Naive thymus-derived CD8-positive, alpha-beta T cell (primary cell): ENCODE measurements at regions of chr6 and their contacts with region 1.

Region 1: GRCh38 chr6:118709859-118710350 is 58.5 kb upstream of the CEP85L start:
- DNase-seq: peak in 9 of 10 donors; percentile 35 to 89 (median 66)
- ATAC-seq: peak; percentile 88 to 93
- H3K4me3 Mint-ChIP-seq: peak overlapping the region; percentile 95 to 99 (median 98)
- H3K27ac Mint-ChIP-seq: peak overlapping the region; percentile 93 to 100 (median 98)
- H3K4me1 Mint-ChIP-seq: peaks cover 39 to 83% (median 66%) of the 10 kb centered on the region in 4 donors
- H3K27me3 Mint-ChIP-seq: no peaks in the 10 kb centered on the region

Region 2: GRCh38 chr6:118367314-118367713 is 342.6 kb before region 1 on chr6:
- POLR2A ChIA-PET with region 1: no interaction called
- DNase-seq: no peak
- ATAC-seq: no peak
- H3K4me3 Mint-ChIP-seq: no peak overlapping the region
- H3K27ac Mint-ChIP-seq: no peak overlapping the region
- H3K4me1 Mint-ChIP-seq: no peaks in the 10 kb centered on the region
- H3K27me3 Mint-ChIP-seq: no peaks in the 10 kb centered on the region

Region 3: GRCh38 chr6:118558464-118559217 is 151.3 kb before region 1 on chr6:
- POLR2A ChIA-PET with region 1: interaction called, 12 read pairs
- DNase-seq: peak in 8 of 10 donors; percentile 9 to 82 (median 45)
- ATAC-seq: peak; percentile 94 to 97
- H3K4me3 Mint-ChIP-seq: peak overlapping the region; percentile 38 to 86 (median 82)
- H3K27ac Mint-ChIP-seq: peak overlapping the region; percentile 93 to 98 (median 96)
- H3K4me1 Mint-ChIP-seq: peaks cover 19 to 55% (median 48%) of the 10 kb centered on the region in 4 donors
- H3K27me3 Mint-ChIP-seq: no peaks in the 10 kb centered on the region

Region 4: DNA sequence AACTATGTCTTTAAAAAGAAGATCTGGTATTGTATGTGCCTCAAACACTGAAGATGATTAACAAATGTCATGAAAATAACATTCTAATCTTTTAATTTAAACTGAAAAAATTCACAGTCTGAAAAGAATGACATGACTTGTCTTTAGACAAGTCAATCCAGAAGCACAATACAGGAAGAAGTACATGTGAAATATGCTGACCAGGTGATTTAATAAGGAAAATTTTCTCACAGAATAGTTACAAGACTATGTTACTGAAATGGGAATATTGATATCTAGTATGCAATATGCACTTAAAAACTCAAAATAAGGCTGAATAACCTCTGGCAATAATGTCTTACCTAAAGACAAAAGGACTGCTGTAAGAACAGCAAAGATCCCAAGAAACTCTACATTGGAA is 71.6 kb before region 1 on chr6:
- POLR2A ChIA-PET with region 1: no interaction called
- DNase-seq: no peak
- ATAC-seq: no peak
- H3K4me3 Mint-ChIP-seq: peak overlapping the region in 1 of 10 donors; percentile 12
- H3K27ac Mint-ChIP-seq: no peak overlapping the region
- H3K4me1 Mint-ChIP-seq: peaks cover 16 to 68% (median 63%) of the 10 kb centered on the region in 4 donors
- H3K27me3 Mint-ChIP-seq: no peaks in the 10 kb centered on the region

Region 5: DNA sequence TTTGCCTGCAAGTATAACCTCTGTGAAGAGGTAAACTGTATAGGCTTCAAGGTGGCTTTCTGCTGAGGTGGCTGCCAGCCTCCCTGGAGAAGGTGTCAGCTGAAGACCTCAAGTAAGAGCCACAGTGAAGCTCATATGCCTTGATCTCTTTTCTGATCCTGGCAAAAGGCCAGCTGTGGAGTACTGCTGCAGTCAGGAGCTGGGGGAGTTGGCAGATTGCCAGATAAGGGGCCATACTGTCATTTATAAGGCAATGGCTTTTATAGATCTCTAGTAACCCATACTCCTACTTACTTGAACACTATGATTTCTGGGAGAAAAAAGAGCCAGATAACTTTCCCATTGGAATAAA is 49.7 kb before region 1 on chr6:
- POLR2A ChIA-PET with region 1: interaction called, 14 read pairs
- DNase-seq: peak; percentile 49 to 86 (median 77)
- ATAC-seq: peak; percentile 79 to 84
- H3K4me3 Mint-ChIP-seq: peak overlapping the region in 9 of 10 donors; percentile 2 to 76 (median 37)
- H3K27ac Mint-ChIP-seq: peak overlapping the region; percentile 75 to 92 (median 86)
- H3K4me1 Mint-ChIP-seq: peaks cover 36 to 70% (median 65%) of the 10 kb centered on the region in 4 donors
- H3K27me3 Mint-ChIP-seq: no peaks in the 10 kb centered on the region

Region 6: GRCh38 chr6:118724211-118724610 is 14.3 kb after region 1 on chr6:
- POLR2A ChIA-PET with region 1: interaction called, 107 read pairs
- DNase-seq: no peak
- ATAC-seq: peak in 1 of 2 donors; percentile 31
- H3K4me3 Mint-ChIP-seq: peak overlapping the region in 8 of 10 donors; percentile 17 to 74 (median 60)
- H3K27ac Mint-ChIP-seq: peak overlapping the region in 9 of 10 donors; percentile 16 to 97 (median 85)
- H3K4me1 Mint-ChIP-seq: peaks cover 51 to 85% (median 79%) of the 10 kb centered on the region in 4 donors
- H3K27me3 Mint-ChIP-seq: no peaks in the 10 kb centered on the region

Region 7: DNA sequence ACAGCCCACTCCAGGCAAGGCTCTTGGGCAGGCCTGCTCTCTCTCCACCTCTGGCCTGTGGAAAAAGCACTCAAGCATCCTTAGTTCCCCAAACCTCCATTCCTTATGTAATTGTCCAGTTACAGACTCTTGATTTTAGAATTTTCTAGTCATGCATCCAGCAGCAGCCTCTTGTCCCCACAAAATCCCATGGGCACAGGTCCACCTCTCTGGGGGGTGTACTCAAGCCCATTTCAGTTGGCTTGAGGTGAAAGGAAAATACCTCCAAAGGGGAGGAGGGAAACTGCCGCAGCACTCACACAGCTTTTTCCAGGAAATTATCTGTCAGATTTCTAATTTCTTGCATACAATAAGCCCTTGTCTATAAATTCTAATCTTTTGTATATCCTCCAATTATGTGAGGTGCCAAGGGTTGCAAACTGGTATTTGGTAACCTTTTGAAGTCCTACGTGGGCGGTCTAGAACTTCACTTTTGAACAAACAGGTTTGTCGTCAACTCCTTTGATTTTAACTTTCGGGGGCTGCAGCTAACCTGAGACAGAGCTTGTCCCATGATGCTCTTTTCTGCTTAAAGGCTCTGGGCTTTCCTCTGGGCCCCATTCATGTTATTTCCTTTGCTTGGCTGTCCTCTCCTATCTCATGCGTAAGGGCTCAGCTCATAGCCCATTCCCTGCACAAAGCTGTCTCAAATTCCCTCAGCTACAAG is 46.2 kb after region 1 on chr6:
- POLR2A ChIA-PET with region 1: interaction called, 11 read pairs
- DNase-seq: peak in 7 of 10 donors; percentile 25 to 80 (median 51)
- ATAC-seq: peak; percentile 92 to 97
- H3K4me3 Mint-ChIP-seq: peak overlapping the region in 9 of 10 donors; percentile 20 to 83 (median 57)
- H3K27ac Mint-ChIP-seq: peak overlapping the region; percentile 81 to 97 (median 92)
- H3K4me1 Mint-ChIP-seq: peaks cover 25 to 46% (median 38%) of the 10 kb centered on the region in 4 donors
- H3K27me3 Mint-ChIP-seq: no peaks in the 10 kb centered on the region

Region 8: GRCh38 chr6:118800394-118801071 is 90.6 kb after region 1 on chr6:
- POLR2A ChIA-PET with region 1: interaction called, 14 read pairs
- DNase-seq: peak; percentile 51 to 93 (median 84)
- ATAC-seq: peak; percentile 90 to 94
- H3K4me3 Mint-ChIP-seq: peak overlapping the region; percentile 30 to 83 (median 66)
- H3K27ac Mint-ChIP-seq: peak overlapping the region; percentile 82 to 95 (median 90)
- H3K4me1 Mint-ChIP-seq: peaks cover 15 to 44% (median 41%) of the 10 kb centered on the region in 4 donors
- H3K27me3 Mint-ChIP-seq: no peaks in the 10 kb centered on the region